ENCODE measurements at regions of chr14 and their contacts with region 1.

Region 1: DNA sequence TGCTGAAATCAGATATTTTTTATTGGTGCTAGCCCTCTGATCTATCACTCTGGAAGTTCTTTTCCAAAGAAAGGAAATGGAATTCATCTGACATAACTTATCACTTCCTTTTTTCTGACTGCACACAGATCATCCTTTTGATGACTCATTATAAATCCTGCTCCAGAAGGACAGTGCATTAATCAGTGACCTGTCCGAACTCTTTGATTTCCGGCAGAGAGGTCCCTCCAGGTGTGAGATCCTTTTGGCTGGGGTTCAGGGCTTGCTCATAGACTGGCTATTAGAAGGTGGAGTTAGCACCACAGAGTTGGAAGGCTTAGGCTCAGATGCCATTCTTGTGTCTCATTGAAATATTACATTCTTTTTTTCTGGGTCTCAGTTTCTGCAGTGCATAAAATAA is 328.2 kb downstream of the ZFP36L1 start:
- DNase-seq: no peak
- ATAC-seq: no peak

Region 2: DNA sequence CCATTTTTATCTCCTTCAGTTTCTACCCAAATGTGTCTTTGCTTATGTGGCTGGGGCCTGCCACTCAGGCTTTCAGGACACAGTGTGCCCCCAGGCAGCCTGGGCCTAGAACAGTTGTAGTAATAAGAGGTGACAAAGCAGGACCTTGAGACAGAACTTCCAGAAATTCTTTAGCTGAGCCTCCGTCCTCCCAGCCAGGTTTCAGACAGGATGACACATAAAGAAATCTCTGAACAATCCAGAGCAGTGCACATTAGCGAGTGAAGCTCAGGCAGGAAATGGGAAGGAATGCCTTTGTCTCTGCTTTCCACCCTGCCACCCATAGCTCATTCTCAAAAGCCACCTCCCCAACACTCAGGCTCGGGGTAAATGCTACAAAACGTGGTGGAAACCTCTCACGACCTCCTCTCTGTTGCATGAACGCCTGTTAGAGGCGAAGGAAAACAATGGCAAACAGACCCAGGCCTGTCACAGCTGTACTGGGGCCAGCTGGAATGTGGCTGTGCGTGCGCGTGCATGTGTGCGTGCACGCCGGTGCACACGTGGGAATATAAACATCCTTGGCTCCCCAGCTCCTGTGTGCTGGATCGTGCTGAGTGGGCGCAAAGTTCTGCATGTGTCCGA is 41.4 kb after region 1 on chr14:
- intact Hi-C with region 1: loop called (anchors 5 kb)
- DNase-seq: no peak
- ATAC-seq: no peak

Measured in Right ventricle myocardium inferior (tissue), 1 donor.